Cardiac septum (tissue), 1 donor: ENCODE measurements at regions of chr4 and their contacts with region 1.

Region 1: GRCh38 chr4:124903995-124904722 is 191.6 kb upstream of the ANKRD50 start:
- DNase-seq: no peak

Region 2: DNA sequence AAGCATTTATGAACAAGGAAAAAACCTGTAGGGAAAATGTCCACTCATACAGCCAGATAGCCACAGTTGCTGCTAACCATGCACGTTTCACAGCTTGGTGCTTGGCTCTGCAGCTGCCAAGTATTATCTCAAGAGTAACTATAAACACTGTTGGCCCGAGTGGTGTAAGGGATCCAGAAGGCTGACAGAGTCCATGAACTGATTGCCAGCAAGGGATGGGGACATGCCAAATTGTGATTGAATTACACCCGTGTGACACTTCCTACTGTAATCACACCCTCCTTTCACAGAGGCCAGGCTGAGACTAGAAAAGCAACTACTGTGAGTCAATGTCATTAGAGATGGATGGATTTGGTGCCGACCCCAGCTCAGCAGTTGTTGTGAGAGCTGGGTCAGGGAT is 32.3 kb after region 1 on chr4:
- intact Hi-C with region 1: loop called (anchors 1 kb)
- DNase-seq: peak; percentile 76